ENCODE measurements at regions of chr12 and their contacts with region 1.

Region 1: DNA sequence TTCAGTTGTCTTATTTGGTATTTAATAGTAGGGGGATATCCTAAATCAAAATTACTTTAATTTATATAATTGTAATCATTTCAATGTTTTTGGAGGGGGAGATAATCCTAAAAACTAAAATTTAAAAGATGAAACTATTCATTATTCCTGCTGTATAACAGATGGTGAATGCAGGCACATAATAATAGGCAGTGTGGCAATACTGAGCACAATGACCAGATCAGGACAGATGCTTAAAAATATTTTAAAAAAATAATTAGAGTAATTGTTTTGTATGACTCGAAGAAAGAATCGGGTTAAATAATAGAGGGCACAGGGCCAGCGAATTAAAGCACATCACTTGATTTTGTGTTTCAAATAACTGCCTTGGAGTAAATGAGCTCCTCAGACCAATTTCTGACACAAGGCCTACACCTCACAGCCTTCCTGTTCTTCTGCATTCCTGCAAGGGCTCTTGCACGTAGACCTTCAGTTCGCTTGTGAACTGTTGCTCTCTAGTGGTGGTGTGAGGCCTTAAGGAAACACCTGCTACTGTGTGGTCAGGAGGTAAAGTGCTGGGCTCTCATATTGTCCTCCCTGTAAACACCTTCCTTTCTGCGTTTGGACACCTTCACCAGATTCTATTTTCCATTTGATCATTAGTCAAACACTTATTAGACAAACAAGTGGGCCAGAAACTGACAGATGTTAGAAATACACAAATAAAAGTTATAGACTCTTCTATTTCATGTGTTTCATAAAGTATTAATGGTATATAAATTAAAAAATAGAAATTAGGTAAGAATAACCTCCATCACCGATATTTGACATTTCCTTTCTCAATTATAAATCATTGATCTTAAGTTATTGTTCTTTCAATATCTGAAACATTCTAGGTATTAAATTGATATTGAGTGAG is 29.3 kb upstream of the KLRF1 start:
- DNase-seq: no peak
- ATAC-seq: peak; percentile 75

Region 2: GRCh38 chr12:9745199-9745598 is 52.8 kb before region 1 on chr12:
- intact Hi-C with region 1: loop called (anchors 5 kb)
- DNase-seq: no peak
- ATAC-seq: no peak